HEK293 (cell line): ENCODE measurements at regions of chr15 and their contacts with region 1.

Region 1: GRCh38 chr15:98311566-98312188 is 336.7 kb upstream of the IGF1R start:
- H3K4me3 ChIP-seq: no peak overlapping the region
- H3K27ac ChIP-seq: no peak overlapping the region
- H3K4me1 ChIP-seq: no peaks in the 10 kb centered on the region
- CTCF ChIP-seq: no peak

Region 2: DNA sequence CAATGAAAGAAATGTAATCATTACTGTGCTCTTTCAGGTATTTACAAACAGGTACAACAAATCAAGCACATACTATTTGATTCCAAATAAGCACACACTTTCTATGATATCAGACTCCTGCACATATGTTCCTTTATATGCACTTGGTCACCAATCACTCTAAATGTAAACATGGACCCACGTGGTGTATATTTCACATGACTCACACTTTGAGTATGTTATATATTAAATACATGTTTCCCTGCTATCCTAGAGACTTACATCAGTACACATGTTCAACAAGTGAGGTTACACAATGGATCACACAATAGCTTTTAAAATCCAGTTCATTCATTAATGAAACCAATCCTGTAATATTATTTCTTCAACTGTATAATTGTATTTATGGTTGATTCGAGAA is 1297.7 kb before region 1 on chr15:
- CTCF ChIA-PET with region 1: no interaction called
- POLR2A ChIA-PET with region 1: no interaction called
- H3K4me3 ChIP-seq: no peak overlapping the region
- H3K27ac ChIP-seq: no peak overlapping the region
- H3K4me1 ChIP-seq: peaks cover 6% of the 10 kb centered on the region; the same call in 1 of the 2 replicates
- CTCF ChIP-seq: no peak

Region 3: DNA sequence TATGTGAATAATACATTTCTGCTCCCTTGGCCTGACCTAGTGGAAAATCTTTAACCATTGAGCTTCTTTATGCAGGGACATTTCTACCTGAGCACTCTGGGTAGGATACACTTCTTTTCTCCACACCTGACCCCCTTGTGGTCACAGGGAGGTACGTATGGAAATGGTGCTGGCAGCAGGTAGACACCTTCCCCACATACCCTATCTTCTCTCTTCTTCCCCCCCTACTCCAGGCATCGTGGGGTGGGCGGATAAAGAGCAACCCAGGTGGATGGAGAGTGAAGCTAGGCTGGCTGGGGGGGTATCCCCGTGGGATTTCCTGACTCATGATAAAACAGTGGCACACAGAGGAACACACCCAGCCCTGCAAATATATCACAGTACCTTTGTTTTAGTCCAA is 39.1 kb before region 1 on chr15:
- CTCF ChIA-PET with region 1: no interaction called
- POLR2A ChIA-PET with region 1: no interaction called
- H3K4me3 ChIP-seq: no peak overlapping the region
- H3K27ac ChIP-seq: no peak overlapping the region
- H3K4me1 ChIP-seq: no peaks in the 10 kb centered on the region
- CTCF ChIP-seq: no peak

Region 4: DNA sequence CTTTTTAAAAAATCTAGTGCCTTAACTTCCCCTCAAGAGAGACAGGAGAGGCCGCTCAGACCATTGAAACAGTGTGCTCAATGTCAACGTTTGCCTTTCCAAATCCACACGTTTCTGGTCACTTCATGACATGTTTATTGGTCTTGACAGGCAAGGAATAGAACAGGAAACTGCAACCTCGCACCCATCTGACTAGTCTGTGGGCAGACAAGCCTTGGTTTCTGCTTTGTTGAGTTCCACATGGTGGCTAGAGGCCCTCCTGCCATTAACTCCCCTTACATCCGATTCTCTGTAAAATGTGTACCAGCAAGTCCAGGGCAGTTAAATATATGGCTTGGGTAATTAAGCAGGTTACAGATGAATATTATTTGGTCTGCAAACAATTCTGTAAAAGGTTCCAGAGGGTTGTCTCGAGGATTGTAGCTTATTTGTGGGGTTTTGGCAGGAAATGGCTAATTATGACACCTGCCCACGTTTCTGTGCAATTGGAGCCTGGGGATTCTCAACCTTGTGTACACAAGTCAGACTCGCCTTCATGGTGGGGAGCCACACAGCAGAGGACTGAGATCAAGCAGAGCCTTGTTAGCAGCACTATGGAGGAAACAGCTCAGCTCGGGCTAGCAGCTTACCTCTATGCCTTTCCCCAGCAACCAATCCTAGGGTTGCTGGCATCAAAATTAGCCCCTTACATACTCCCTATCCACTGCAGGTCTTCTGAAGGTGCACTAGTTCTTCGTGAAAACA is 19.2 kb after region 1 on chr15:
- CTCF ChIA-PET with region 1: interaction called, 16 read pairs
- POLR2A ChIA-PET with region 1: no interaction called
- H3K4me3 ChIP-seq: no peak overlapping the region
- H3K27ac ChIP-seq: no peak overlapping the region
- H3K4me1 ChIP-seq: no peaks in the 10 kb centered on the region
- CTCF ChIP-seq: no peak

Region 5: DNA sequence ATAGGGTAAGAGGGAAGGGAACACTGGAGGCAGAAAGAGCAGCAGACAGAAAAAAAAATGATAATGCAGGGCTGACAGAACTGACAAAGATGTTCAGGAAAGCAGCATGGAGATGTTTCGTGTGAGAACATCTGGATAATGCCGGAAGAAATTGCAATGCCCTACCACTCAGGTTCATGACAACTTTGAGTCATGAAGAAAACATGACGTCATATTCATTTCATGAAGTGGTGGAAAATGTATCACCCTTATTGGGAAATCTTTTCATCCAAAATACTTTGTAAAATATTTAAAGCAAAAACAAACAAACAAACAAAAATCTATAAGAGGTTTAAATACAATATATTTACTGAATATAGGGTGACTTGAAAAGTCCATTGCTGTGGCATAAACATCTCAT is 31.2 kb after region 1 on chr15:
- CTCF ChIA-PET with region 1: no interaction called
- POLR2A ChIA-PET with region 1: no interaction called
- H3K4me3 ChIP-seq: no peak overlapping the region
- H3K27ac ChIP-seq: no peak overlapping the region
- H3K4me1 ChIP-seq: no peaks in the 10 kb centered on the region
- CTCF ChIP-seq: no peak

Region 6: DNA sequence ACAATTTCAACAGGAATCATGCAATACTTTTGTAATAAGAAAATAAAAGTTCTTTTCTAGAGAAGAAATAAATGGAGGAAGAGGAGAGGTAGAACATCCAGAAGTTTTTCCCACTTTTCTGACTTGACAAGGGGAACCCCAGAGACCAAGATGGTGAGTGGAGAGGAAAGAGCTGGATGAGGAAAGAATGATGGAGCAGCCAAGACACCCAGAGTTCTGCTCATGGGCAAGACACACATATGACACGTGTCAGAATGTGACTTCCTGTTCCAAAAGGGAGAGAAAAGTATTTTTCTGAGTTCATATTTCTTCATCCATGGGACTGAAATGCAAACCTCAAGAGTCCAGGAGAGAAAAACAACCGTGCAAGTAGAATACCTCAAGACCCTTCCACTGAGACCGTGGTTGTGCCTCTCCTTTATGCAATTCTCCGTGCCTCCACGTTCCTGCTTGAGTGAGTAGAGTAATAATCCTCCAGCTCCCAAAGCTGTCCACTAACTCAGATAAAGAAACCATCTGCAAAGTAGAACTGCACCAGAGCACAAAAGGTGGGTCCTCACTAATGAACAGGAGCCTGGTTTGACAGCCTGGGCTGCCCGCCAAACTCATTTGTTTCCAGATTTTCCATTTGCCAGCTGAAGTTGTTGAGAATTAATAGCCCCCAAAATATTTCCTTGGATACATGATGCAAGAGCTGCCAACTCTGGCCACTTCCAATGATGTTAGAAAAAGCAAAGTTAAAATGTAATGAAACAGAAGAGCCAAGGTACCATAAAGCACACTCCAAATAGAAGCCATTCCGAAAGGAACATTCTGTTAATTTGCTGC is 64.0 kb after region 1 on chr15:
- CTCF ChIA-PET with region 1: no interaction called
- POLR2A ChIA-PET with region 1: no interaction called
- H3K4me3 ChIP-seq: no peak overlapping the region
- H3K27ac ChIP-seq: no peak overlapping the region
- H3K4me1 ChIP-seq: no peaks in the 10 kb centered on the region
- CTCF ChIP-seq: no peak

Region 7: DNA sequence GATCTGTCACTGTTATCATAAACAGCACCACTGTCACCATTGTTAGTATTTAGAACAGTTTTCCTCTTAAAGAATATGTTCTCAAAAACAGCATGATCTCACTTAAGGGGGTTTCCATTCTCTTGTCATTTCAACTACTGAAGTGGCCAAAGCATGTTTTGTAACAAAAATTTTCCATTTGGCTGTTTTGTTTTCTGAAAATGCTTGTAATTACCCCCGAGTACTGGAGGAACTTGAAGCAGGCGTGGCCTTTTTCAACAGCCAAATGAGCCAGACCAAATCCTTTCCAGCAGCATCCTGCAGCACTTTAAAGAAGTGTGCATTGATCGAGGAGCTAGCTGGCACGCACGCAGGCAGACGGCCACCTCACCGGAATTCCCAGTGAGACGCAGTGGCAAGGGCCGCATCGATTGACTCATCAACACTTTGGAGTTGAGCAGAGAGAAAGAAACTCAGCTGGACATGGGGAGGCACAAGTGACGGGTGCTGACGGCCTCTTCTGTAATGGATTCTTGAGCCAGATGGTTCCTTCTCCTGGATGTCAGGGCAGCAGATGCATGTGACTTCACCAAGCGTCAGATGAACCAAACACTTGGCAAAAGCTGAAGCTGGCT is 102.4 kb after region 1 on chr15:
- CTCF ChIA-PET with region 1: interaction called, 85 read pairs
- POLR2A ChIA-PET with region 1: interaction called, 3 read pairs
- H3K4me3 ChIP-seq: no peak overlapping the region
- H3K27ac ChIP-seq: no peak overlapping the region
- H3K4me1 ChIP-seq: no peaks in the 10 kb centered on the region
- CTCF ChIP-seq: no peak

Region 8: GRCh38 chr15:98421419-98422129 is 109.9 kb after region 1 on chr15:
- CTCF ChIA-PET with region 1: interaction called, 85 read pairs
- POLR2A ChIA-PET with region 1: interaction called, 3 read pairs
- H3K4me3 ChIP-seq: peak overlapping the region; percentile 18
- H3K27ac ChIP-seq: no peak overlapping the region
- H3K4me1 ChIP-seq: 0 out of 2 replicates have a peak, but pooled peaks cover 2% of the 10 kb centered on the region
- CTCF ChIP-seq: peak; percentile 95

Region 9: DNA sequence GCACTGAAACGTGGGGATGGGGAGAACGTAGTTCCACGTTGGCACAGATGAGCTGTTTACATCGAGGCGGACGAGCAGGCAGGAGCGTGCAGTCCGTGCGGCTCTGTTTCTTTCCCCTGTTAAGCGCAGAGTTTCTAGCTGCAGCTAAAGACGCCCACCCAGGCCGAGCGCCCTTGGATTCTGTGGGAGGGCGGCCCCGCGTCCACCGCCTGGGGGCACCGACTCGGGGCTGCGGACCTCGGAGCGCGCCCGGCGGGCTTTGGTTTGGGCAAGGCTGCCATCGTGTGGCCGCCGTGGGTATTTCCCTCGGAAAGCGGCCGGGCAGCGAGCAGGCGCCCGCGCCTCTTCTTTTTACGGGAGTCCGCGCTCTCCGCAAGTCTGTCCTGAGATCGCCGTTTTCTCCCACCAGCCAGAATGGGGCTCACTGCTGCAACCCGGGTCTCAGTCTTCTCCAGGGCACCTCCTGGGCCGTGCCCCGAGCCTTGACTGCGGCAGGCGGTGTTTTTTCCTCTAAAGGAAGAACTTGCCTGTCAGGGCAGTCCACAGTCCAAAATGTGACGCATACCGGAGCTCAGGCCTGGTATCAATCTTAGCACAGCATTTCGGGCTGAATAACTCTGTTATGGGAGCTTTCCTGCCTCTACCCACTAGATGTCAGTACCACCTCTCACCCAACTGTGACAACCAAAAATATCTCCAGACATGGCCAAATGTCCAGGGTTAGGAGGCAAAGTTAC is 116.7 kb after region 1 on chr15:
- CTCF ChIA-PET with region 1: interaction called, 85 read pairs
- POLR2A ChIA-PET with region 1: no interaction called
- H3K4me3 ChIP-seq: peak overlapping the region; percentile 43
- H3K27ac ChIP-seq: no peak overlapping the region
- H3K4me1 ChIP-seq: no peaks in the 10 kb centered on the region
- CTCF ChIP-seq: peak; percentile 78